CD4-positive, alpha-beta T cell (primary cell): ENCODE measurements at regions of chr20 and their contacts with region 1.

Region 1: DNA sequence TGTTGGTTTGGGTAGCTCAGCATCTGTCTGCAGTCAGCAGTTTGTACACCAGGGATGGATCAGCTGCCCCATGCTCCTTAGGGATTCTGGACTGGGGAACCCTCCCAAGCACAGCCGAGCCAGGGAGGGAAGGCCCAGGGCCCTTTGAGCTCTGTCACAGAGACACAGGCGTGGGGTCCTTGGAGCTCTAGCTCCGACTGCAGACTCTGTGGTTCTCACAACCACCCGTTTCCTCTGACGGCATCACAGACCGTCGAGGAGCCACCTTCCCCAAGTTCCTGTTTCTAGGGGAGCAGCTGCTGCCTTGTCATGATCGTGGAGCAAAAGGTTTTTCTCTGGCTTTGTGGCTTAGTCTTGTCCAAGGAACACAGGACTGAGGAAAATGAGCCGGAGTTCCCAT is at the start of gene SLA2:
- DNase-seq: peak; percentile 53 to 88 (median 64)
- ATAC-seq: peak; percentile 83
- H3K4me3 ChIP-seq: peak within 1 kb of the TSS; percentile 79
- H3K4me3 Mint-ChIP-seq: peak within 1 kb of the TSS; percentile 98
- H3K27ac ChIP-seq: peak within 1 kb of the TSS; percentile 64 to 69
- H3K27ac Mint-ChIP-seq: peak within 1 kb of the TSS; percentile 97
- H3K4me1 ChIP-seq: peaks cover 56% of the 10 kb centered on the region
- H3K4me1 Mint-ChIP-seq: peaks cover 64% of the 10 kb centered on the region
- H3K27me3 ChIP-seq: no peaks in the 10 kb centered on the region
- H3K27me3 Mint-ChIP-seq: no peaks in the 10 kb centered on the region
- CTCF ChIP-seq: no peak
- total RNA-seq, gene SLA2: 19.9 to 21.3 TPM

Region 2: GRCh38 chr20:36424314-36424713 is 221.7 kb before region 1 on chr20:
- CTCF ChIA-PET with region 1: no interaction called
- POLR2A ChIA-PET with region 1: no interaction called
- intact Hi-C with region 1: no loop called
- DNase-seq: no peak
- ATAC-seq: no peak
- H3K4me3 ChIP-seq: no peak overlapping the region
- H3K4me3 Mint-ChIP-seq: no peak overlapping the region
- H3K27ac ChIP-seq: no peak overlapping the region
- H3K27ac Mint-ChIP-seq: no peak overlapping the region
- H3K4me1 ChIP-seq: no peaks in the 10 kb centered on the region
- H3K4me1 Mint-ChIP-seq: no peaks in the 10 kb centered on the region
- H3K27me3 ChIP-seq: no peaks in the 10 kb centered on the region
- H3K27me3 Mint-ChIP-seq: peaks cover 12% of the 10 kb centered on the region
- CTCF ChIP-seq: no peak

Region 3: DNA sequence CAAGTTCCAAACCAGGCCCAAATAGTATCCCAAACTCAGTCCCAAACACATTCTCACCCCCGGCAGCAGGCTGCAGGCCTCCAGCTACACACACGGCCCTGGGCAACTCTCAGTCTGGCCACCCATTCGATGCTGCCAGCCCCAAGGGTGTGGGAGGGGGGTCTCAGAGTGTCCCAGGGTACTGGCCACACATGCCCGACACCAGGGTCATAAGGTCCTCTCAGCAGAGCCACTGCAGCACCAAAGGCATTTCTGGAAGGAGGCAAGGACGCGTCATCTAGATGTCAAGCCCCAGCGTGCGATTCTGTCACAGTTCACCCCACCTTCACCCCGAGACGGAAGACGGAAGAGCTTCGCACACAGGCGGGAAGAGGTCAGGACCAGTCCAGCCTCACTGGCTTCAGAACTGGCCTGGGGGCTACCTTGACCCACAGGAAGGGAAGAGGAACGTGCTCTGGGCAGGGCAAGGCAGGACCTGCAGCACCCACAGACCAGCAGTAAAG is 95.2 kb before region 1 on chr20:
- CTCF ChIA-PET with region 1: no interaction called
- POLR2A ChIA-PET with region 1: no interaction called
- intact Hi-C with region 1: loop called in 1 of 2 experiments (anchors 1 kb)
- DNase-seq: no peak
- ATAC-seq: no peak
- H3K4me3 ChIP-seq: no peak overlapping the region
- H3K4me3 Mint-ChIP-seq: no peak overlapping the region
- H3K27ac ChIP-seq: no peak overlapping the region
- H3K27ac Mint-ChIP-seq: no peak overlapping the region
- H3K4me1 ChIP-seq: no peaks in the 10 kb centered on the region
- H3K4me1 Mint-ChIP-seq: no peaks in the 10 kb centered on the region
- H3K27me3 ChIP-seq: no peaks in the 10 kb centered on the region
- H3K27me3 Mint-ChIP-seq: no peaks in the 10 kb centered on the region
- CTCF ChIP-seq: no peak

Region 4: GRCh38 chr20:36582821-36583220 is 63.2 kb before region 1 on chr20:
- CTCF ChIA-PET with region 1: no interaction called
- POLR2A ChIA-PET with region 1: no interaction called
- intact Hi-C with region 1: no loop called
- DNase-seq: no peak
- ATAC-seq: no peak
- H3K4me3 ChIP-seq: no peak overlapping the region
- H3K4me3 Mint-ChIP-seq: no peak overlapping the region
- H3K27ac ChIP-seq: peak overlapping the region in 1 of 2 donors; percentile 38
- H3K27ac Mint-ChIP-seq: peak overlapping the region; percentile 77
- H3K4me1 ChIP-seq: peaks cover 21% of the 10 kb centered on the region
- H3K4me1 Mint-ChIP-seq: peaks cover 28% of the 10 kb centered on the region
- H3K27me3 ChIP-seq: no peaks in the 10 kb centered on the region
- H3K27me3 Mint-ChIP-seq: no peaks in the 10 kb centered on the region
- CTCF ChIP-seq: no peak

Region 5: DNA sequence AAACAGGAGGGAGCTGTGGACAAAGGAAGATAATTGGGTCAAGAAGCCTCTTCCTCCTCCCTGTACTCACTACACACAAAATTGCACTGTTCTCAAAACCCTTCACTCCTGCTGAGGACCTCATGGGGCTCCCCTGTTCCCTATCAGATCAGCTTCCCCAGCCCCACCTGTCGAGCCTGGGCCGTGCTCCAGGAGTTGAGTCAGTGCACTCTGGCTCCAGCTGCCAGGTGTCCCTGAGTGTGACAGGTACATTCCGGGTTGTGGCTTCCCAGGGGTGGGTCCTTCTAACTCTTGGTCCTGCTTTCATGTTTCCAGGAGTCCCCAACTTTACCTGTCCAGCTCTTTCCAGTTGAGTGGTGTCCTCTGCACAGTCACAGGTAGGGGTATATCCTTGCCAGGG is 32.0 kb before region 1 on chr20:
- CTCF ChIA-PET with region 1: interaction called, 6 read pairs
- POLR2A ChIA-PET with region 1: interaction called, 20 read pairs
- intact Hi-C with region 1: loop called (anchors 1 to 2 kb)
- DNase-seq: no peak
- ATAC-seq: no peak
- H3K4me3 ChIP-seq: no peak overlapping the region
- H3K4me3 Mint-ChIP-seq: no peak overlapping the region
- H3K27ac ChIP-seq: peak overlapping the region in 1 of 2 donors; percentile 29
- H3K27ac Mint-ChIP-seq: peak overlapping the region; percentile 22
- H3K4me1 ChIP-seq: peaks cover 13% of the 10 kb centered on the region
- H3K4me1 Mint-ChIP-seq: peaks cover 12% of the 10 kb centered on the region
- H3K27me3 ChIP-seq: no peaks in the 10 kb centered on the region
- H3K27me3 Mint-ChIP-seq: no peaks in the 10 kb centered on the region
- CTCF ChIP-seq: no peak

Region 6: DNA sequence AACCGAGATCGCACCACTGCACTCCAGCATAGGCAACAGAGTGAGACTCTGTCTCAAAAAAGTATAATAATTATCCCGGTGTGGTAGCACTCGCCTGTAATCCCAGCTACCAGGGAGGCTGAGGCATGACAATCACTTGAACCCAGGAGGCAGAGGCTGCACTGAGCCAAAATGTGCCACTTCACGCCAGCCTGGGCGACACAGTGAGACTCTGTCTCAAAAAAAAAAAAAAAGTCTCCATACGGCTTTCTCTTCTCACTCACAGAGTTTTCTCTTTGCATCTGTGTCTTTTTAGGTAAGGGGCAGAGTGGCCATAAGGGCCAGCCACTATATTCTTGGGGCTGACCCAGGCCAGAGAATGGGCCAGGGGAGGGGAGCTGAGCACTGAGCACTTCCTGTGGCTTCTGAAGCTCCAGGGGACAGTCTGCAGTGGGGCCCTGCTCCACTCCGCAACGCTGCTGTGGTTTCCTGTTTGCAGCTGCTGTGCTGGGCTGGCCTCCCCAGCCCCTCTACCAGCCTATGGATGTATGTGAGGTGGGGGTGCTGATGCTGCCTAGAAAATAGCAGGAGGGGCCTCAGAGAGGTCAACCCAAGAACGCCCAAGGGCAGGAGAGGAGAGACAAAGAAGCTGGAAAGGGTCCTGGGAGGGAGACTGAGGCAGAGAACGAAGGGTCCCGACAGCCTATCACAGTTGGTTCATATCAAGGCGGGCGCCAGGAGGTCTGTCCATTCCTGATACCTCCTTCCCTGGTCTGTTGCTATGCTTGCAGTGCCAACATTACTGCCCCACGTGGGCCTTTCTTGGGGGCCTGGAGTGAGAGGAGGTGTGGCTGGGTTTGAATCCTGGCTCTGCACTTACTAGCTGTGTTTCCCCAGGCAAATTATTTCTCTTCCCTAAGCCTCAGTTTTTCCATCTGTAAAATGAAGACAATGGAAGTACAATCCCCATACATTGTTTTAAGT is 16.0 kb before region 1 on chr20:
- CTCF ChIA-PET with region 1: no interaction called
- POLR2A ChIA-PET with region 1: interaction called, 16 read pairs
- intact Hi-C with region 1: loop called in 1 of 2 experiments (anchors 2 kb)
- DNase-seq: peak in 13 of 14 experiments; percentile 16 to 71 (median 46)
- ATAC-seq: peak; percentile 85
- H3K4me3 ChIP-seq: peak overlapping the region; percentile 20
- H3K4me3 Mint-ChIP-seq: peak overlapping the region; percentile 82
- H3K27ac ChIP-seq: peak overlapping the region; percentile 57 to 65
- H3K27ac Mint-ChIP-seq: peak overlapping the region; percentile 88
- H3K4me1 ChIP-seq: peaks cover 44% of the 10 kb centered on the region
- H3K4me1 Mint-ChIP-seq: peaks cover 59% of the 10 kb centered on the region
- H3K27me3 ChIP-seq: no peaks in the 10 kb centered on the region
- H3K27me3 Mint-ChIP-seq: no peaks in the 10 kb centered on the region
- CTCF ChIP-seq: no peak

Region 7: GRCh38 chr20:37032077-37032476 is 386.1 kb after region 1 on chr20:
- CTCF ChIA-PET with region 1: no interaction called
- POLR2A ChIA-PET with region 1: no interaction called
- intact Hi-C with region 1: no loop called
- DNase-seq: no peak
- ATAC-seq: no peak
- H3K4me3 ChIP-seq: no peak overlapping the region
- H3K4me3 Mint-ChIP-seq: no peak overlapping the region
- H3K27ac ChIP-seq: no peak overlapping the region
- H3K27ac Mint-ChIP-seq: no peak overlapping the region
- H3K4me1 ChIP-seq: no peaks in the 10 kb centered on the region
- H3K4me1 Mint-ChIP-seq: no peaks in the 10 kb centered on the region
- H3K27me3 ChIP-seq: no peaks in the 10 kb centered on the region
- H3K27me3 Mint-ChIP-seq: no peaks in the 10 kb centered on the region
- CTCF ChIP-seq: no peak